PC-9 (cell line): ENCODE measurements at regions of chr11 and their contacts with region 1.

Region 1: DNA sequence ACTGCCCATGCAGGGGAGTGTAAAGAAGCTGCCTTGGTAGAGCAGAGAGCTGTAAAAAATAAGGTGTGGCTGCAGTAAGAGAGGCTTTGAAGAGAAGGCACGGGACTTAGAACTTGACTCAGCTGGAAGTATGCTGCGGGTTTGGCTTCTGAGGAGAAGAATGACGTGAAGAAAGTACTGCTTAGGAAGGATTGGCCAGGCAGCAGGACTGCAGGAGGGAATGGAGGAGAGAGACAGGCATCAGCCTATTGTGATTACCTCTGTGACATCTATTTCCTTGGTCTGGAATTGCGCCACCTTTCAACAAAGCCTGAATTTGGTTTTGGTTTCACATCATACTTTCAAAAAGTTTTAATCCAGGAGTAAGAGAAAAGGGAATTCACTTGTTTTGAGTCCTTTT is 22.5 kb downstream of the PRRG4 start:
- DNase-seq: no peak
- H3K4me3 ChIP-seq: no peak overlapping the region
- H3K27ac ChIP-seq: no peak overlapping the region
- H3K4me1 ChIP-seq: no peaks in the 10 kb centered on the region
- H3K27me3 ChIP-seq: no peaks in the 10 kb centered on the region
- CTCF ChIP-seq: no peak

Region 2: GRCh38 chr11:32838505-32838904 is 13.7 kb before region 1 on chr11:
- CTCF ChIA-PET with region 1: no interaction called
- POLR2A ChIA-PET with region 1: interaction called, 12 read pairs
- intact Hi-C with region 1: no loop called
- DNase-seq: peak; percentile 18 to 89
- H3K4me3 ChIP-seq: no peak overlapping the region
- H3K27ac ChIP-seq: peak overlapping the region; percentile 63
- H3K4me1 ChIP-seq: peaks cover 33% of the 10 kb centered on the region
- H3K27me3 ChIP-seq: no peaks in the 10 kb centered on the region
- CTCF ChIP-seq: no peak

Region 3: GRCh38 chr11:33015621-33016551 is 163.7 kb after region 1 on chr11 and contains the start of gene DEPDC7:
- CTCF ChIA-PET with region 1: no interaction called
- POLR2A ChIA-PET with region 1: no interaction called
- intact Hi-C with region 1: no loop called
- DNase-seq: peak; percentile 55 to 88
- H3K4me3 ChIP-seq: peak within 1 kb of the TSS; percentile 57
- H3K27ac ChIP-seq: no peak within 1 kb of the TSS
- H3K4me1 ChIP-seq: peaks cover 11% of the 10 kb centered on the region
- H3K27me3 ChIP-seq: peaks cover 4% of the 10 kb centered on the region; the same call in 1 of the 2 replicates
- CTCF ChIP-seq: no peak
- total RNA-seq, gene DEPDC7: 0.68 and 1.2 TPM in 2 replicates

Region 4: GRCh38 chr11:33039274-33040032 is 187.2 kb after region 1 on chr11 and contains the start of gene TCP11L1:
- CTCF ChIA-PET with region 1: no interaction called
- POLR2A ChIA-PET with region 1: no interaction called
- intact Hi-C with region 1: no loop called
- DNase-seq: peak in 1 of 2 experiments; percentile 91
- H3K4me3 ChIP-seq: peak within 1 kb of the TSS; percentile 80
- H3K27ac ChIP-seq: peak within 1 kb of the TSS; percentile 60
- H3K4me1 ChIP-seq: peaks cover 6% of the 10 kb centered on the region
- H3K27me3 ChIP-seq: no peaks in the 10 kb centered on the region
- CTCF ChIP-seq: no peak
- total RNA-seq, gene TCP11L1: 8.1 and 10.3 TPM in 2 replicates